ENCODE measurements at regions of chr10 and their contacts with region 1.

Region 1: GRCh38 chr10:7417103-7417623 is 6.3 kb upstream of the SFMBT2 start:
- DNase-seq: no peak
- ATAC-seq: no peak
- H3K4me3 ChIP-seq: no peak overlapping the region
- H3K27ac ChIP-seq: no peak overlapping the region
- H3K4me1 ChIP-seq: peaks cover 3 to 5% of the 10 kb centered on the region in 2 donors
- H3K27me3 ChIP-seq: no peaks in the 10 kb centered on the region
- CTCF ChIP-seq: peak; percentile 28 to 65 (median 54)
- POLR2A ChIP-seq: no peak

Region 2: GRCh38 chr10:6786579-6787031 is 630.6 kb before region 1 on chr10:
- in situ Hi-C with region 1: no loop called
- intact Hi-C with region 1: loop called (anchors 5 kb)
- DNase-seq: no peak
- ATAC-seq: no peak
- H3K4me3 ChIP-seq: no peak overlapping the region
- H3K27ac ChIP-seq: no peak overlapping the region
- H3K4me1 ChIP-seq: no peaks in the 10 kb centered on the region
- H3K27me3 ChIP-seq: no peaks in the 10 kb centered on the region
- CTCF ChIP-seq: peak in 1 of 5 experiments; percentile 32
- POLR2A ChIP-seq: no peak

Region 3: GRCh38 chr10:6920072-6921019 is 496.8 kb before region 1 on chr10:
- in situ Hi-C with region 1: loop called (anchors 10 to 25 kb)
- intact Hi-C with region 1: loop called (anchors 2 kb)
- DNase-seq: peak; percentile 15 to 46
- ATAC-seq: peak; percentile 61 to 88
- H3K4me3 ChIP-seq: no peak overlapping the region
- H3K27ac ChIP-seq: no peak overlapping the region
- H3K4me1 ChIP-seq: peaks cover 0 to 7% of the 10 kb centered on the region in 2 donors
- H3K27me3 ChIP-seq: peaks cover 0 to under 1% (median 0%) of the 10 kb centered on the region in 3 donors
- CTCF ChIP-seq: peak in 4 of 5 experiments; percentile 29 to 68 (median 46)
- POLR2A ChIP-seq: no peak

Region 4: GRCh38 chr10:7121154-7121810 is 295.9 kb before region 1 on chr10:
- in situ Hi-C with region 1: no loop called
- intact Hi-C with region 1: loop called (anchors 5 kb)
- DNase-seq: peak in 1 of 2 donors; percentile 22
- ATAC-seq: no peak
- H3K4me3 ChIP-seq: no peak overlapping the region
- H3K27ac ChIP-seq: no peak overlapping the region
- H3K4me1 ChIP-seq: no peaks in the 10 kb centered on the region
- H3K27me3 ChIP-seq: no peaks in the 10 kb centered on the region
- CTCF ChIP-seq: peak; percentile 21 to 57 (median 27)
- POLR2A ChIP-seq: no peak

Region 5: DNA sequence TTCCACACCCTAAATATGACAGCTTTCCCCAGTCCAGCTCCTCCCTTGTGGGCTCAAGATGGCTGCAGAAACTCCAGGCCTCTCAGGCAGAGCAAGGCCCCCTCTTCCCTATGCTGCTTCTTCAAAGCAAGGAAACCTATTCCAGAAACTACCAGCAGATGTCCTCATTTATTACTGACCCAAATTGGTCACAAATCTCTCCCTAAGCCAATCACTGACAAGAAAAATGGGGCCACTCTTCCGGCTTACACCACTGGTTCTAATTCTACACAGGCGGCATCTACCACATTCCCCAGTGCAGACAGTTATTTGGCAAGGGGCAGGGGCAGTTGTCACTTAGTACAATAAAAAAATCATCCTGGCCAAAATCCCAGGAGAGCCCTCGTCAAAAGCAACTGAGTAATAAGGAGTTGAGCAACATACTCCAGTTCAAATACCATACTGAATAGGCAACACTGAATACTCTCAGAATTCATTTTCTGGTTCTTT is 156.7 kb before region 1 on chr10:
- in situ Hi-C with region 1: loop called in 3 of 4 experiments (anchors 5 to 10 kb)
- intact Hi-C with region 1: no loop called
- DNase-seq: peak; percentile 84 to 93
- ATAC-seq: peak; percentile 96 to 99
- H3K4me3 ChIP-seq: no peak overlapping the region
- H3K27ac ChIP-seq: peak overlapping the region; percentile 42 to 75 (median 60)
- H3K4me1 ChIP-seq: peaks cover 15 to 17% of the 10 kb centered on the region in 2 donors
- H3K27me3 ChIP-seq: no peaks in the 10 kb centered on the region
- CTCF ChIP-seq: peak; percentile 72 to 86 (median 78)
- POLR2A ChIP-seq: no peak

Measured in gastrocnemius medialis (tissue), 4 donors.